ENCODE measurements at regions of chrX and their contacts with region 1.

Region 1: DNA sequence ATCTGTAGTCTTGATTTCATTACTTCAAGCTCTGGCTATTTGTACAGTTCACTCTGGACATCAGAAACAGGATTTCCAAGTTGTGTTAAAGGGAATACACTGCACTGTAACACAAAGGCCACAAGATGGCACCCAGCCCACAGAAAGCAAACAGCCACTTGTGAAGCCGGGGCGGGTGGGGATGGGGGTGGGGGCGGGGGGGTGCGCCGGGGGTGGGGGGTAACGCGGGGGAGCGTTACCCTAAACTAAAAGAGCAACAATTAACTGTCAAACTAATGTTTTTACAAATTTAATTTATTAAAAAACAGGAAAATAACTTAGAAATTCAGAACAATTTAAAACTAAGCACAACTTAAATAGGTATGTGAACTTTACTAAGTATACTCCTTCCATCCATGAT is 27.3 kb downstream of the PRDX4 start:
- DNase-seq: peak; percentile 40 to 72
- H3K4me3 ChIP-seq: no peak overlapping the region
- H3K4me1 ChIP-seq: no peaks in the 10 kb centered on the region
- H3K27me3 ChIP-seq: no peaks in the 10 kb centered on the region

Region 2: DNA sequence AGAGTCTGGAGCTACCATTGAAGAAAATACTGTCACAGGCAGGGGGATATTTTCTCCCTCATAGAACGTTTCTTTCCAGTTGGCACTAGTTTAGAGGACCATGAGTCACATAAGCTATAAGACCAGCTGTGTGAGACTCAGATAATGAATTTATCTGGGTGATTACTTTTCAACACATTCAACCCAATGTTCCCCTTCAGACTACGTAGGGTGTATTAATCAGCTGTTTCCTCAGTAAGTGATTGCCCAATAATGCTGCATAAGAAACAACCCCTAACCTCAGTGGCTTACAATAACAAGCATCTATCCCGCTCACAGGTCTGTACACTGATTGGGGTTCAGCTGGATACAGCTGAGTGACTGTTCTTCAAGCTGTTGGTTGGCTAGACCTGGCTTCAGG is 1383.8 kb before region 1 on chrX:
- in situ Hi-C with region 1: no loop called
- DNase-seq: no peak
- H3K4me3 ChIP-seq: no peak overlapping the region
- H3K4me1 ChIP-seq: no peaks in the 10 kb centered on the region
- H3K27me3 ChIP-seq: no peaks in the 10 kb centered on the region

Region 3: GRCh38 chrX:23901805-23902204 is 207.2 kb after region 1 on chrX:
- in situ Hi-C with region 1: loop called (anchors 5 kb)
- DNase-seq: peak; percentile 63 to 67
- H3K4me3 ChIP-seq: no peak overlapping the region
- H3K4me1 ChIP-seq: peaks cover 12% of the 10 kb centered on the region
- H3K27me3 ChIP-seq: no peaks in the 10 kb centered on the region